Dendritic cell treated with granulocyte-macrophage colony-stimulating factor and Interleukin-4, amounts not matched to agents 40 ng/mL and 50 ng/mL, for 4 days (primary cell): ENCODE measurements at regions of chr2 and their contacts with region 1.

Region 1: GRCh38 chr2:219388127-219388844 is 574 bp upstream of the DNPEP start:
- H3K4me3 Mint-ChIP-seq: peak overlapping the region; percentile 65
- H3K27ac Mint-ChIP-seq: peak overlapping the region; percentile 88
- H3K4me1 Mint-ChIP-seq: peaks cover 44% of the 10 kb centered on the region
- H3K27me3 Mint-ChIP-seq: peaks cover 5% of the 10 kb centered on the region

Region 2: DNA sequence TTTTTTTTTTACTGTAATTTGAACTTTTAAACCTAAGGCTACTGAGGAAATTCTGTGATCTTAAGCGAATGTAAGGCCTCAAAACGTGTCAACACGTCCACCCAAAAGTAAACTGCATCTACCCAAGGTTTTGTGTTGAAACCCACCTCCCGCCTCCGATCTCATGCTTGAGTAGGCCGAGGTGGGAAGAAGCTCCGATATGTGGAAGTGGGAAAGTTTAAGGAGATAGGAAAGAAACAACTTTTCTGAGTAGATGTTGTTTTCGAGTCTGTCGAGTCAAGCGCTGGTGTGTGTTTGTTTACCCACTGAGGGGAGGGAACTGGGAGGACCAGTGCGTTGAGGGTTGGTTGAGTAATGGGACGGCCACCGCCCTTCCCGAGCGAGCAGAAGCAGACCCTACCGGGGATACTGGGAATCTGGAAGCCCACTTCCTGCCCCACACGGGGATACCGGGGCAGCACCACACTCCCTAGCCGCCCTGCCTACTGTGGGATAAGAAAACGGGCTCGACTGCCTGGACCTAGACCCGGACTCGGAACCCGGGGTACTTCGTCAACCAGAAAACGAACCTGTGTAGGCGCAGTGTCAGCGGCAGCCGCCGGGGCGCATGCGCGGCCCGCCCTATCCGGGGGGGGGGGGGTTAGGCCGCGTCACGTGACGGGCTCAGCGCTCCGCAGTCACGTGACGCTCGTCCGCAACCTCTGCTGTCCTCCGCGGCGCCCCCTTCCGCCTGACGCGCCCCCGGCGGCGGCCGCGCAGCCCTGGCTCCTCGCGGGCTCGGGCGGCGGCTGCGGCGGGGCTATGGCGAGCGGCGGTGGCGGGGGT is 210.5 kb before region 1 on chr2 and contains the start of gene RETREG2:
- intact Hi-C with region 1: loop called (anchors 10 kb)
- H3K4me3 Mint-ChIP-seq: peak within 1 kb of the TSS; percentile 88
- H3K27ac Mint-ChIP-seq: peak within 1 kb of the TSS; percentile 99
- H3K4me1 Mint-ChIP-seq: peaks cover 84% of the 10 kb centered on the region
- H3K27me3 Mint-ChIP-seq: no peaks in the 10 kb centered on the region

Region 3: DNA sequence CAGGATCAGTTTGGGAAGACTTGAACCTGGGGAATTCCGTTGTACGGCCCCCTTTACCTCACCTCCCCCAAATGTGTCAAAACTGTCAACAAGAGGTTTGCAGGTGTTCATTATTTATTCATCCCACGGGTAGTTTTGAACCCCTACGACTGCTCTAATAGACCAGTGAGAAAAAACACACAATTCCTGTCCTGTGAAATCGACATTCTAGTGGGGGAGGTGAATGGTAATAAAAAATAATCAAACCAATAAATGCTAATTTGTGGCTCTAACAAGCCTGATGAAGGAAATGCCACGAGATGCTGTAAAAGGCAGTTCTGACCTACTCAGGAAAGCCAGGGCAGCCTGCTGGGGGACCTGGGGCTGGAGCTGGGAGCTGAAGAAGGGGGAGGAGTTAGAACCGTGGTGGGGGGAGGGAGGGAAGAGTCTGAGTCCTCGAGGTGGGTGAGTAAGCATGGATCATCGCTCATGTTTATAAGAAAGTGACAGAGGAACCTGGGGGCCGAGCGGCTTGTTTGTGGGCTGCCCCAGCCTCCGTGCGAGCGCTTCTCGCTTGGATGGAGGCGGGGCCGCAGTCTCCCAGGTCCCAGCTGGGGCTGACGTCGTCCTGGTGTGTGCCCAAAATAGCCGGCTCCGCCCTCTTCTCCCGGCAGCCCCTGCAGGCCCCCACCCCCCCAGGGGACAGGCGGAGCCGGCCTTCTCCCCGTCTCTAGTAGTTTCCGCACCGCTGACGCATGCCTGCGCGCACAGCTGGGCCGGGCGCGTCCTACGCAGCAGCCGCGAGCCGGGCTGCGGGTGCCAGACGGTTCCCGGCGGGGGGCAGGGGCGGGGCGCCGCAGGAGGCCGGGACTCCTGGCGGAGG is 109.4 kb before region 1 on chr2 and contains the start of gene DNAJB2:
- intact Hi-C with region 1: loop called (anchors 5 kb)
- H3K4me3 Mint-ChIP-seq: peak within 1 kb of the TSS; percentile 86
- H3K27ac Mint-ChIP-seq: peak within 1 kb of the TSS; percentile 89
- H3K4me1 Mint-ChIP-seq: peaks cover 50% of the 10 kb centered on the region
- H3K27me3 Mint-ChIP-seq: peaks cover 5% of the 10 kb centered on the region

Region 4: GRCh38 chr2:219402665-219403515 is 14.6 kb after region 1 on chr2:
- intact Hi-C with region 1: loop called (anchors 1 kb)
- H3K4me3 Mint-ChIP-seq: no peak overlapping the region
- H3K27ac Mint-ChIP-seq: peak overlapping the region; percentile 99
- H3K4me1 Mint-ChIP-seq: peaks cover 72% of the 10 kb centered on the region
- H3K27me3 Mint-ChIP-seq: peaks cover 16% of the 10 kb centered on the region

Region 5: DNA sequence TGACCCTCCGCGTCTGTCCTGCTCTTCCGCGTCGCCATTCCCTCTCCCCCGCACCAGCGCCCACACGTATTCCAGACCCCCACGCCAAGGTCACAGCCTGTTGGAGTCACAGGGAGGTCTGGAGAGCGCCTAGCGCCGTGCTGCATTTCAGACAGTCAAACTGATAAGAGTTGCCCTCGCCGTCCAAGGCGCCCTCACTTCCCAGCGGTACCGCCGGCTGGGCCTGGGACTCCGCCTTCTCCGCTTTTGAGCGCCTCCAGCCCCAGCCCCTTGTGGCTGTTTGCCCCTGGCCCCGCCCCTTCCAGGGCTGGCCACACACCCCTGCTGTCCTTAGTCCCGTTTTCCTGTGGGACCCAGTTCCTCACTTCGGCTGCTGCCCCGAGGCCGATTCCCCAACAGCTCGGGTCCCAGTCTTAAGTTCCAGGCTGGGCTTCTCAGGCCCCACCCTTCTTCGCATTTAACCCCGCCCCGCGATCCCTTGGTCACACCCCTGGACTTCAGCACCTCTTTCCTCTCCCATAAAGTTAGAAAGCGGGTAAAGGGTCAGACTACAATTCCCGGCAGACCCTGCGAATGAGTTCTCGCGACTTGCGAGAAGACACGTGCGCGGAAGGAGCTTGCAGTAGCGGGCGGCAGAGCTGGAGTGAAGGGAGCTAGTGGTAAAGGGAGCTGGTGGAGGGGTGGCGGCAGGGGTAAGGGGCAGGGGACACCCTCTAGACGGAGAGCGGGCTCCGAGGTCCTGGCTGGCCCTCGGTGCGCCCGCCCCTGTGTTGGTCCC is 110.2 kb after region 1 on chr2 and contains the start of gene GMPPA:
- intact Hi-C with region 1: loop called (anchors 1 kb)
- H3K4me3 Mint-ChIP-seq: peak within 1 kb of the TSS; percentile 90
- H3K27ac Mint-ChIP-seq: peak within 1 kb of the TSS; percentile 94
- H3K4me1 Mint-ChIP-seq: peaks cover 40% of the 10 kb centered on the region
- H3K27me3 Mint-ChIP-seq: peaks cover 43% of the 10 kb centered on the region